GM12878 (cell line): ENCODE measurements at regions of chr20 and their contacts with region 1.

Region 1: GRCh38 chr20:53939572-53940359 is 130.6 kb downstream of the BCAS1 start:
- DNase-seq: peak; percentile 93
- ATAC-seq: peak; percentile 81
- H3K4me3 ChIP-seq: 0 out of 2 replicates have a peak overlapping the region, but pooled peaks have one; percentile 63
- H3K27ac ChIP-seq: peak overlapping the region; percentile 84
- H3K4me1 ChIP-seq: peaks cover 54% of the 10 kb centered on the region
- H3K27me3 ChIP-seq: no peaks in the 10 kb centered on the region
- CTCF ChIP-seq: peak; percentile 70 to 96 (median 83)
- EP300 ChIP-seq: 0 out of 4 replicates have a peak, but pooled peaks of 1 of the 2 experiments have one; percentile 10
- POLR2A ChIP-seq: no peak
- RAD21 ChIP-seq: peak; percentile 98

Region 2: GRCh38 chr20:53216856-53217576 is 722.8 kb before region 1 on chr20:
- CTCF ChIA-PET with region 1: interaction called, 4 read pairs
- POLR2A ChIA-PET with region 1: no interaction called
- RAD21 ChIA-PET with region 1: no interaction called
- SMC1A ChIA-PET with region 1: no interaction called
- in situ Hi-C with region 1: no loop called
- intact Hi-C with region 1: loop called (anchors 5 kb)
- DNase-seq: no peak
- ATAC-seq: peak; percentile 97
- H3K4me3 ChIP-seq: no peak overlapping the region
- H3K27ac ChIP-seq: no peak overlapping the region
- H3K4me1 ChIP-seq: no peaks in the 10 kb centered on the region
- H3K27me3 ChIP-seq: no peaks in the 10 kb centered on the region
- CTCF ChIP-seq: peak; percentile 81 to 93 (median 83)
- EP300 ChIP-seq: no peak
- POLR2A ChIP-seq: no peak
- RAD21 ChIP-seq: peak; percentile 84

Region 3: DNA sequence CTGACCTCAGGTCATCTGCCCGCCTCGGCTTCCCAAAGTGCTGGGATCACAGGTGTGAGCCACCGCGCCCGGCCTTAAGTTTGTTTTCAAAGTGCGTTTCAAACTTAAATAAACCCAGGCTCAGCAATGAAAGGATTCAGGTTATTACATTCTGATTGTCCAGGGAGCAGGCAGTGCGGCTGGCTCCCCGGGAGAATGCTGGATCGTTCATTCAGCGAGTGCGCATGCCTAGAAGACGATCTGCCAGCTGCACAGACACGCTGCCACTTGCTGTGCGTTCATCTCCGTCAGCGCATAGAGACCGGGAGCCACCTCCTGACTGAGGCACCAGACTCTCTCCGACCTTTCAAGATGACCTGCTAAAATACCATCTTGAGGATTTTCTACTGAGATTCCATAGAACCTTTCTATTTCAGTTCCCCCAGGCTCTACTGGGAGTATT is 182.3 kb before region 1 on chr20:
- CTCF ChIA-PET with region 1: interaction called, 3 read pairs
- POLR2A ChIA-PET with region 1: no interaction called
- RAD21 ChIA-PET with region 1: interaction called, 12 read pairs
- SMC1A ChIA-PET with region 1: interaction called, 6 read pairs
- in situ Hi-C with region 1: loop called (anchors 5 kb)
- intact Hi-C with region 1: no loop called
- DNase-seq: no peak
- ATAC-seq: no peak
- H3K4me3 ChIP-seq: no peak overlapping the region
- H3K27ac ChIP-seq: no peak overlapping the region
- H3K4me1 ChIP-seq: peaks cover 28% of the 10 kb centered on the region
- H3K27me3 ChIP-seq: no peaks in the 10 kb centered on the region
- CTCF ChIP-seq: no peak
- EP300 ChIP-seq: no peak
- POLR2A ChIP-seq: no peak
- RAD21 ChIP-seq: no peak

Region 4: DNA sequence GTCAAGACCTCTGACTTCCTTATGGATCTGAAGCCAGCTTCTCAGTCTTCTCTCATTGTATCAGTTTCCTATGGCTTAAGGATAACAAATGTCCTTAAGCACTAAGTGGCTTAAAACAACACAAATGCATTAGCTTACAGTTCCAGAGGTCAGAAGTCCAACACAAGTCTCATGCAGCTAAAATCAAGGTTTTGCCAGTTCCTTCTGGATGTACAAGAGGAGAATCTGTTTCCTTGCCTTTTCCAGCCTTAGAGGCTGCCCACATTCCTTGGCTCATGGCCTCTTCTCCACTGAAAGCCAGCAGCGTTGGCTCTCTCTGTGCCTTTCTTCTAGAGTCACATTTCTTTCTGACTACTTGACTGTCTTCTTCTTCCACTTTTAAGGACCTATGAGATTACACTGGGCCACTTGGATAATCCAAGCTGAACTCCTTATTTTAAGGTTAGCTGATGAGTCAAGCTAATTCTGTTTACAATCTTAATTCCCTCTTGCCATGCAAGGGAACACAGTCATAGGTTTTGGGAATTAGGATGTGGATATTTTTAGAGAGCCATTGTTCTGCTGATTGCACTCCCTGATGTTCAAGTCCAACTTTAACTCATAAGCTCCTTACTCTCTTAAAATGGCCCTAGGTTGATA is 48.3 kb before region 1 on chr20:
- CTCF ChIA-PET with region 1: interaction called, 8 read pairs
- POLR2A ChIA-PET with region 1: interaction called, 5 read pairs
- RAD21 ChIA-PET with region 1: interaction called, 12 read pairs
- SMC1A ChIA-PET with region 1: interaction called, 10 read pairs
- in situ Hi-C with region 1: no loop called
- intact Hi-C with region 1: no loop called
- DNase-seq: no peak
- ATAC-seq: no peak
- H3K4me3 ChIP-seq: no peak overlapping the region
- H3K27ac ChIP-seq: no peak overlapping the region
- H3K4me1 ChIP-seq: peaks cover 25% of the 10 kb centered on the region
- H3K27me3 ChIP-seq: no peaks in the 10 kb centered on the region
- CTCF ChIP-seq: no peak
- EP300 ChIP-seq: no peak
- POLR2A ChIP-seq: no peak
- RAD21 ChIP-seq: no peak

Region 5: DNA sequence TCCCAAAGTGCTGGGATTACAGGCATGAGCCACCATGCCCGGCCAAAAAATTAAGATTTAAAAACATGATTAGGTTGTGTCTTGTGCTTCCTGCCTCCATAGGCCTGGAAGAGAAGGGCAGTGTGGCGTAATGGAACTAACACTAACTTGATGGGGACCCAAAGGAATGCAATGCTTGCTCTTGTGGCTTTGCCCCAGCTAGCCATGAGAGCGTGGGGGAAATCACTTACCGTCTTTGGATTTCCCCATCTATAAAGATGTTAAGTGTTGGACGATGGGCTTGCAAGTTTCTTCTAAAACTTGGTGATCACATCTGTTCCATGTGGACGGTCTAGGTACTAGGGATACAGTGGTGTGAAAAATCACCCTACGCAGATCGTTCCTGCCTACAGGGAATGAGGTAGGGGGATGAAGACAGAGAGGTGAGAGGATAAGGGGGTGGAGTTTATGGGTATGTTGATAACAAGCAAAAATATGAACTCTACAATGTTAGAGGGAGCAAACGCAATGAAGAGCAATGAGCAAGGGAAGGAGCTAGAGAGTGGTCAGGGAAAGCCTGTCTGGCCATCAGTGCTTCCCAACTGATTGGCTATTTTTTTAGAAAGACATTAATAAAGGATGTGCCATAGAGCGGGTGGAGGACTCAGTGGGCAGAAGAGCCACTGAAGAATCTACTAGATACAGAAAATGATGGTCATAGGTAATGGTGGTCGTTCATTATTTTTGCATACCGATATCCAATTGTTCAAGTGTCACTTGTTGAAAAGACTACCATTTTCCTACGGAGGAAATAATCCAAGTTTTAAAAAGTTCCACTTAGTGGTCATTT is 34.5 kb before region 1 on chr20:
- CTCF ChIA-PET with region 1: interaction called, 24 read pairs
- POLR2A ChIA-PET with region 1: interaction called, 3 read pairs
- RAD21 ChIA-PET with region 1: interaction called, 25 read pairs
- SMC1A ChIA-PET with region 1: interaction called, 49 read pairs
- in situ Hi-C with region 1: no loop called
- intact Hi-C with region 1: loop called (anchors 5 kb)
- DNase-seq: no peak
- ATAC-seq: peak; percentile 51
- H3K4me3 ChIP-seq: 0 out of 2 replicates have a peak overlapping the region, but pooled peaks have one; percentile 15
- H3K27ac ChIP-seq: peak overlapping the region; percentile 72
- H3K4me1 ChIP-seq: peaks cover 43% of the 10 kb centered on the region
- H3K27me3 ChIP-seq: no peaks in the 10 kb centered on the region
- CTCF ChIP-seq: no peak
- EP300 ChIP-seq: peak in 1 of 2 experiments; percentile 50; a peak in 1 of 4 replicates
- POLR2A ChIP-seq: no peak
- RAD21 ChIP-seq: no peak

Region 6: GRCh38 chr20:54199721-54200176 is 260.0 kb after region 1 on chr20:
- CTCF ChIA-PET with region 1: interaction called, 5 read pairs
- POLR2A ChIA-PET with region 1: no interaction called
- RAD21 ChIA-PET with region 1: no interaction called
- SMC1A ChIA-PET with region 1: no interaction called
- in situ Hi-C with region 1: no loop called
- intact Hi-C with region 1: loop called (anchors 5 kb)
- DNase-seq: peak; percentile 39
- ATAC-seq: peak; percentile 71
- H3K4me3 ChIP-seq: no peak overlapping the region
- H3K27ac ChIP-seq: no peak overlapping the region
- H3K4me1 ChIP-seq: peaks cover 13% of the 10 kb centered on the region
- H3K27me3 ChIP-seq: no peaks in the 10 kb centered on the region
- CTCF ChIP-seq: peak; percentile 82 to 96 (median 94)
- EP300 ChIP-seq: no peak
- POLR2A ChIP-seq: no peak
- RAD21 ChIP-seq: peak; percentile 93